Activated CD8-positive, alpha-beta T cell treated with anti-CD3 and anti-CD28 coated beads, Interleukin-2, amount 10 ng/mL, durations not matched to agents 7 days and 5 days (primary cell): ENCODE measurements at regions of chr11 and their contacts with region 1.

Region 1: GRCh38 chr11:62427630-62428233 is 8.9 kb downstream of the SCGB1A1 start:
- DNase-seq: peak; percentile 35
- ATAC-seq: peak; percentile 34
- H3K4me3 Mint-ChIP-seq: peak overlapping the region; percentile 2
- H3K27ac Mint-ChIP-seq: peak overlapping the region; percentile 84
- H3K4me1 Mint-ChIP-seq: peaks cover 79% of the 10 kb centered on the region
- H3K27me3 Mint-ChIP-seq: peaks cover 6% of the 10 kb centered on the region

Region 2: DNA sequence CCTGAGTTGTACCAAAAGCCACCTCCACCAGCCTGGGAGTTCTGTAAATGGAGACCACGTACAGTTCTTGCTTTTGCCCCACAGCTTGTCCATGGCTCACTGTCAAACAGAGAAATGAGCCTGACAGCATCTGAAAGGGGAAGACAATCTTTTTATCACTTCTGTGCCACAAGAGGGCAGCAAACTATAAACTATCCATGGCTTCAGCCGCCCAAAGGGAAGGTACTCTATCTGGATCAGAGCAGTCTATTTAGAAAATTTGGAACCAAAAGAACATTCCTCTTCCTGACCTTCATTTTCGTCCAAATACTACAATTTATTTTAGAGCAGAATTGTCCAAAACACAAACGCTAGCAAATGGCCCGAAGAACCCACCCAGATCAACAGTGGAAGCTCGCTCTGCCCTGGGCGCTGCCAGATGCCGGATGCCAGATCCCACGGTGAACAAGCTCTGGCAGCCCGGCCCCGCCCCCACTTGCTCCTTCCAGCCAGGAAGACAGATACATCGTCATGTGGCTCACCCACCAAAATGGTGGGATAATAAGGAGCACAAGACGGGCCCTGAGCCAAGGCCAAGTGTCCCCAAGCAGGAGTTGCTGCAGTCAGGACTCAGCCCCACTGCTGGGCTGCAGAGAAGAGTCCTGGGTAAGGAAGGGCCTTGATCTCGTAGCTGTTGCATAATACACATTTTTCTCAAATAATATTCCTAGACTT is 32.8 kb before region 1 on chr11:
- CTCF ChIA-PET with region 1: interaction called, 96 read pairs
- POLR2A ChIA-PET with region 1: no interaction called
- DNase-seq: peak; percentile 73
- ATAC-seq: peak; percentile 82
- H3K4me3 Mint-ChIP-seq: no peak overlapping the region
- H3K27ac Mint-ChIP-seq: no peak overlapping the region
- H3K4me1 Mint-ChIP-seq: peaks cover 33% of the 10 kb centered on the region
- H3K27me3 Mint-ChIP-seq: no peaks in the 10 kb centered on the region

Region 3: DNA sequence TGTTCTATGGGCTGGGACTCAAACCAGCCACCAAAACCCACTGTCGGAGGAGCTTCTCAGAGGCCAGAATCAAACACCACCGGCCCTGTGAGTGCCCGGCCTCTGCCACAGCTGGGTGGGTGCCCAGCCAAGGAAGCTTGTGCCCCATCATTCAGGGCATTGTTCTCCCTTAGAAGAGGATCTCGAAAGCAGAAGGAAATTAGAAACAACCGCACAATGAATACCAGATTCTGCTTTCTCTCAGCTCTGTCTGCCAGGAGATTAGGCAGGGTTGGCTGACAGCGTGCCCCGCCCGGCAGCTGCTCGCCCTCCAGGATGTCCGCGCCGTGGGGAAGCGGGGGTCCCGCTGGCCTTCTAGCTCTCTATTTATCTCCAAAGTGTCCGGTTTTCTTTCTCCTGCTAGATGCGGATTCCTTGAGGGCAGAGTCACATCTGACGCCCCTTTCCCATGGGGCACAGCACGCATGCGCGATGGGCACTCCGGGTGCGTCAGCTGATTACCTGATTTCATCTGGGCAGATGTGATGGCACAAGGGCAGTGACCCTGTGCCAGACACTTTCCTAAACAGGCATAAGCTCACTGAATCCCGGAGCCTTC is 16.6 kb after region 1 on chr11:
- CTCF ChIA-PET with region 1: interaction called, 19 read pairs
- POLR2A ChIA-PET with region 1: interaction called, 3 read pairs
- DNase-seq: peak; percentile 32
- ATAC-seq: peak; percentile 42
- H3K4me3 Mint-ChIP-seq: peak overlapping the region; percentile 64
- H3K27ac Mint-ChIP-seq: no peak overlapping the region
- H3K4me1 Mint-ChIP-seq: peaks cover 3% of the 10 kb centered on the region
- H3K27me3 Mint-ChIP-seq: peaks cover 30% of the 10 kb centered on the region

Region 4: GRCh38 chr11:62458212-62459002 is 30.7 kb after region 1 on chr11:
- CTCF ChIA-PET with region 1: interaction called, 11 read pairs
- POLR2A ChIA-PET with region 1: no interaction called
- DNase-seq: no peak
- ATAC-seq: no peak
- H3K4me3 Mint-ChIP-seq: no peak overlapping the region
- H3K27ac Mint-ChIP-seq: no peak overlapping the region
- H3K4me1 Mint-ChIP-seq: no peaks in the 10 kb centered on the region
- H3K27me3 Mint-ChIP-seq: no peaks in the 10 kb centered on the region

Region 5: GRCh38 chr11:62542750-62543567 is 115.2 kb after region 1 on chr11:
- CTCF ChIA-PET with region 1: interaction called, 249 read pairs
- POLR2A ChIA-PET with region 1: interaction called, 10 read pairs
- DNase-seq: peak; percentile 81
- ATAC-seq: peak; percentile 36
- H3K4me3 Mint-ChIP-seq: peak overlapping the region; percentile 90
- H3K27ac Mint-ChIP-seq: peak overlapping the region; percentile 84
- H3K4me1 Mint-ChIP-seq: peaks cover 78% of the 10 kb centered on the region
- H3K27me3 Mint-ChIP-seq: peaks cover 7% of the 10 kb centered on the region

Region 6: GRCh38 chr11:62573592-62574362 is 146.0 kb after region 1 on chr11 and contains the start of gene EEF1G:
- CTCF ChIA-PET with region 1: interaction called, 35 read pairs
- POLR2A ChIA-PET with region 1: interaction called, 6 read pairs
- DNase-seq: peak; percentile 100
- ATAC-seq: peak; percentile 96
- H3K4me3 Mint-ChIP-seq: peak within 1 kb of the TSS; percentile 99
- H3K27ac Mint-ChIP-seq: peak within 1 kb of the TSS; percentile 97
- H3K4me1 Mint-ChIP-seq: peaks cover 53% of the 10 kb centered on the region
- H3K27me3 Mint-ChIP-seq: no peaks in the 10 kb centered on the region
- total RNA-seq, gene EEF1G: 1,058 to 1,098 TPM

Region 7: GRCh38 chr11:62665075-62665598 is 237.4 kb after region 1 on chr11 and contains the starts of genes C11orf98 and CSKMT:
- CTCF ChIA-PET with region 1: interaction called, 11 read pairs
- POLR2A ChIA-PET with region 1: no interaction called
- DNase-seq: peak; percentile 97
- ATAC-seq: peak; percentile 93
- H3K4me3 Mint-ChIP-seq: peak within 1 kb of the TSS; percentile 98
- H3K27ac Mint-ChIP-seq: peak within 1 kb of the TSS; percentile 93
- H3K4me1 Mint-ChIP-seq: peaks cover 38% of the 10 kb centered on the region
- H3K27me3 Mint-ChIP-seq: no peaks in the 10 kb centered on the region
- total RNA-seq, gene C11orf98: 131 to 133 TPM
- total RNA-seq, gene CSKMT: 21.9 to 22.8 TPM

Region 8: GRCh38 chr11:62974848-62975522 is 547.3 kb after region 1 on chr11:
- CTCF ChIA-PET with region 1: no interaction called
- POLR2A ChIA-PET with region 1: no interaction called
- DNase-seq: no peak
- ATAC-seq: no peak
- H3K4me3 Mint-ChIP-seq: no peak overlapping the region
- H3K27ac Mint-ChIP-seq: no peak overlapping the region
- H3K4me1 Mint-ChIP-seq: no peaks in the 10 kb centered on the region
- H3K27me3 Mint-ChIP-seq: peaks cover 11% of the 10 kb centered on the region